ENCODE measurements at regions of chr4 and their contacts with region 1.

Region 1: DNA sequence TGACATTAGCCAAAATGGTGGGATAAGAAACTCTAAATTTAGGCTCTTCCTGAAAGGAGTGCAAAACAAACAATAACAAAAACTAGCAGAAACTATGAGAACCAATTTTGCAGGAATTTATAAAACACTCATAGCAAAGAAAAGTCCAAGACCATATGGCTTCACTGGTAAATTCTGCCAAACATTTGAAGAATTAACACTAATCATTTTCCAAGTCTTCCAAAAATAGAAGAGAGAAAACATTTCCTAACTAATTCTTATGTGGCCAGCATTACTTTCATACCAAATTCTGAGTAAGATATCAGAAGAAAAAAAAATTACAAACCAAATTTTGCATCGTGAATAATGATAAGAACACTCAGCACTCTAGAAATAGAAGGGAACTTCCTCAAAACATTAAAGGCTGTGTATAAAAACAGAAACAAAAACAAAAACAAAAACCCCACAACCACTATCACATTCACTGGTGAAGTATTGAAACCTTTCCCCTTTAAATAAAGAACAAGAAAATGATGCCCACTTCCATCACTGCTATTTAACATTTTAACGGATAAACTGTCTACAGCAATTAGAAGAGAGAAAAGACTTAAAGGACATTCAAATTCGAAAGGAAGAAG is 524.3 kb upstream of the GALNTL6 start:
- DNase-seq: no peak
- ATAC-seq: no peak
- H3K4me3 ChIP-seq: no peak overlapping the region
- H3K27ac ChIP-seq: no peak overlapping the region
- H3K4me1 ChIP-seq: no peaks in the 10 kb centered on the region
- H3K27me3 ChIP-seq: no peaks in the 10 kb centered on the region
- CTCF ChIP-seq: no peak
- POLR2A ChIP-seq: no peak

Region 2: DNA sequence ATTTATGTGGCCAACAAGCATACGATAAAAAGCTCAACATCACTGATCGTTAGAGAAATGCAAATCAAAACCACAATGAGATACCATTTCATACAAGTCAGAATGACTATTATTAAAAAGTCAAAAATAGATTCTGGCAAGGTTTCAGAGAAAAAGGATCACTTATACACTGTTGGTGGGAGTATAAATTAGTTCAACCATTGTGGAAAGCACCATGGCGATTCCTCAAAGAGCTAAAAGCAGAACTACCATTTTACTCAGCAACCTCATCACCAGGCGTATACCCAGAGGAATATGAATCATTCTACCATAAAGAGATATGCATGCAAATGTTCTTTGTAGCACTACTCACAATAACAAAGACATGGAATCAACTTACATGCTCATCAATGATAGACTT is 45.6 kb after region 1 on chr4:
- intact Hi-C with region 1: loop called in 1 of 10 experiments (anchors 2 kb)
- DNase-seq: no peak
- ATAC-seq: no peak
- H3K4me3 ChIP-seq: no peak overlapping the region
- H3K27ac ChIP-seq: no peak overlapping the region
- H3K4me1 ChIP-seq: no peaks in the 10 kb centered on the region
- H3K27me3 ChIP-seq: no peaks in the 10 kb centered on the region
- CTCF ChIP-seq: no peak
- POLR2A ChIP-seq: no peak